Right cardiac atrium (tissue), 5 donors: ENCODE measurements at regions of chr3 and their contacts with region 1.

Region 1: GRCh38 chr3:151439652-151440129 is 21.2 kb downstream of the IGSF10 start:
- DNase-seq: no peak
- ATAC-seq: peak; percentile 79 to 84
- H3K4me3 ChIP-seq: no peak overlapping the region
- H3K27ac ChIP-seq: no peak overlapping the region
- H3K4me1 ChIP-seq: no peaks in the 10 kb centered on the region
- H3K27me3 ChIP-seq: no peaks in the 10 kb centered on the region

Region 2: DNA sequence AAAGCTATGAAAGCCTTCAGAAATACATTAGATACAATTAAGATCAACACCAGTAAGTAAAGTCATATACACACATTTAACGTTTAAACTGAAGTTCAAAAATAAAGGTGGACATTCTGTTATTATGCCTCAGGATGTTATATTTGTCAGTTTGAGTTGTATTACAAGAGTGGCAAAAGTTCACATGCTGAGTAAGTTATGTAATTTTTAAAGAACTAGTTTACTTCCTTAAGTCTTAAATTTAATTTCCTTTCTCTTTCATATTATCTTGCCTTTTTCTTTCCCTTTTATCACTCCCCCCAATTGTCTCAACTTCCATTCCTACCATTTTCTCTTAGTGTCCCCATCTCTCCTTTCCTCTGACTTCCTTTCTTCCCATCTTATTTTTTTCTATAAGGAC is 118.2 kb before region 1 on chr3:
- intact Hi-C with region 1: no loop called
- DNase-seq: no peak
- ATAC-seq: no peak
- H3K4me3 ChIP-seq: no peak overlapping the region
- H3K27ac ChIP-seq: no peak overlapping the region
- H3K4me1 ChIP-seq: no peaks in the 10 kb centered on the region
- H3K27me3 ChIP-seq: no peaks in the 10 kb centered on the region

Region 3: DNA sequence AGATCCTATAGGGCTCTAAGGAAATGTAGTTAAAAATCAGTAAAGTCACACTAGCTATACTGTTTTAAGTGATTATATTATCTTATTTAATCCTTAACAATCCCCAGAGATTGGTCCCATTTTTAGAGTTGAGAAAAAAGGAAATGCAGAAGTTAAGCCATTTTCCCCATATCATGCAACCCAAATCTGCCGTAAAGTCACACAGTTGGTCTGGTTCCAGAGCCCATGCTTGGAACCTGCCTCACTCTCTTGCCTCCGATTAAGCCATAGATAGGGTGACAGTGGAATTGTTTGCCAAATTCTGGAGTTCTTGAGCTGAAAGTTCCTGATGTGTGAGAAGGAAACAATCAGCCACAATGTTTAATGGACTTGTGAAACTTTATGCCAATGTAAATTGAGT is 108.0 kb before region 1 on chr3:
- intact Hi-C with region 1: no loop called
- DNase-seq: no peak
- ATAC-seq: no peak
- H3K4me3 ChIP-seq: no peak overlapping the region
- H3K27ac ChIP-seq: no peak overlapping the region
- H3K4me1 ChIP-seq: no peaks in the 10 kb centered on the region
- H3K27me3 ChIP-seq: no peaks in the 10 kb centered on the region

Region 4: DNA sequence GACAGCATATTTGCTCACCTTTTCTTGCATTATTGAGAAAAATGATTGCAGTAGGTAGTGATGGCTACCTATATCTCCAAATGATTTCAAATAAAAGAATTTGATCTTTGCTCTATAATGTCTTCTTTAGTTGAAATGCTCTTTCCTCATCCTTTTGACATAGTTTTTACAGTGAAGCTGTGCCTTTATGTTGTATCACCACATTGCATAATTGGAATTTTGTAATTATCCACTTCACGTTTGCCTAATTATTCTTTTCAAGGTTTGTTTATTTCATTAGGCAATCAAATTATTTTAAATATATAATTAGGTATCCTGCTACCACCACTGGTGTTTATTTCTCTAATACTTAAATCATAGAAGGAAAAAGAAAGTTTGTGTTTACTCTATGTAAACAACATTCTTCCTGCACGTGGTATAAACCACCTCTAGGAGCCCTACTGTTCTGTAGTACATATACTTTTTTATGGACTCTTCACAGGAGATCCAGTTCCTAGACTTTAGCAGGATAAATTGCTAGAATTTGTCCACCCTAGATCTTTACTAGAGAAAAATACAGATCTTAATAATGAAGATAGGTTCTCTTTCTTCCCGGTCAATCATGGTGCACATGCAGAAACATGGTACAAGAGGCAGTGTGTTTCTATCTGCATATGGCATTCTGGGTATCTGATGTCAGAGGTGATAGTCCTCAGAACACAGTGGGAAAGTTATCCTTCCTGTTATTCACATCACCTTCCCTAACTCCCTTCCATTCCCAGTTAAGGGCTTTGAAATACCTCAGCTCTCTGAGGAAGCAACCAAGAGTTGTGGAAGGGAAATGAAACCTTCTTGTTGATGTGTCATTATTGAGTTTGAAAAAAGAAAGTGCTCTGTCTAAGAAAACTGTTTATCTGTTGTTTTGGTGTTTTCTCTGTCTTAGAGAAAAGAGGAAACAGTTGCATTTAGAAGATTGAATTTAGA is 88.8 kb before region 1 on chr3:
- intact Hi-C with region 1: no loop called
- DNase-seq: no peak
- ATAC-seq: no peak
- H3K4me3 ChIP-seq: no peak overlapping the region
- H3K27ac ChIP-seq: no peak overlapping the region
- H3K4me1 ChIP-seq: peaks cover 3% of the 10 kb centered on the region
- H3K27me3 ChIP-seq: no peaks in the 10 kb centered on the region

Region 5: GRCh38 chr3:151660885-151661284 is 221.2 kb after region 1 on chr3:
- intact Hi-C with region 1: loop called in 1 of 4 experiments (anchors 10 kb)
- DNase-seq: no peak
- ATAC-seq: no peak
- H3K4me3 ChIP-seq: no peak overlapping the region
- H3K27ac ChIP-seq: no peak overlapping the region
- H3K4me1 ChIP-seq: no peaks in the 10 kb centered on the region
- H3K27me3 ChIP-seq: no peaks in the 10 kb centered on the region

Region 6: DNA sequence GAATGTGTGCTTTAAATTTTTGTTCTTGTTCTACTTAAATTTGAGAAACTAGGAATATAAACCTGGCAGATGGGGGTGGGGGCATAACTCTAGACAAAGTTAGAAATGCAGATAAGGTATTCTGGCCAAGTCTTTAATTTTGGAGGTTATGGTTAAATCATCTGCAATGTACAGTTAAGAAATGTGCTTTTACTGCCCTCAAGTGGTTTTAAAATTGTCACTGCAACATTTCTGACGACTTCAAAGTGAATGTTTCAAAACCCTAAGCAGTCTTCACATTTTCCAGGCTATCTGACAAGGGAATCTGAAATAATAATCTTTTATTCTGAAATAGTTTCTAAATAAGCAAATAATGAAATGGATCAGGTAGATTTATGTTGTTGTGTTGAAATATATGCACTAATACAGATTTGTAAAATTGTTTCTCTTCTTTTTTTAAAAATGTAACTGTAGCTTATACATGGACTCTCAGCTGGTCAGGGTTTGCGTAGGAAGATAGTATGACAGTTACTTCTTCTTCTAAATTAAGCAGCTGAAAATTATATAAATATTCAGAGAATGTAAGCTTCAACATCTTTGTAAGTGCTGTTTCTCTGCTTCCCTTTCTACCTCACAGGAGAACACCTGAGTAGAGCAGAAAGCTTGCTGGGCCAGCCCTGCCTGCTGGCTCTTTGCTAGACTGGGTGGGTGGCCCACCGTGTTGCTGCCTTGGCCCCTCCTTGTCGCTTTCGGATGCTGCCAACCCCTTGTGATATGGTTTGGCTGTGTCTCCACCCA is 478.8 kb after region 1 on chr3:
- intact Hi-C with region 1: loop called in 3 of 4 experiments (anchors 5 to 10 kb)
- DNase-seq: no peak
- ATAC-seq: peak; percentile 38 to 64
- H3K4me3 ChIP-seq: no peak overlapping the region
- H3K27ac ChIP-seq: no peak overlapping the region
- H3K4me1 ChIP-seq: no peaks in the 10 kb centered on the region
- H3K27me3 ChIP-seq: no peaks in the 10 kb centered on the region